Activated CD8-positive, alpha-beta memory T cell treated with anti-CD3 and anti-CD28 coated beads, Interleukin-2, amount 10 ng/mL, durations not matched to agents 7 days and 5 days (primary cell): ENCODE measurements at regions of chr7 and their contacts with region 1.

Region 1: GRCh38 chr7:128135515-128136214 is 104.4 kb upstream of the LRRC4 start:
- DNase-seq: peak; percentile 63
- ATAC-seq: peak; percentile 94
- H3K4me3 Mint-ChIP-seq: peak overlapping the region; percentile 61
- H3K27ac Mint-ChIP-seq: no peak overlapping the region
- H3K4me1 Mint-ChIP-seq: peaks cover 15% of the 10 kb centered on the region
- H3K27me3 Mint-ChIP-seq: peaks cover 48% of the 10 kb centered on the region

Region 2: GRCh38 chr7:127708788-127709187 is 426.9 kb before region 1 on chr7:
- CTCF ChIA-PET with region 1: interaction called, 21 read pairs
- DNase-seq: peak; percentile 79
- ATAC-seq: peak; percentile 81
- H3K4me3 Mint-ChIP-seq: no peak overlapping the region
- H3K27ac Mint-ChIP-seq: no peak overlapping the region
- H3K4me1 Mint-ChIP-seq: peaks cover 1% of the 10 kb centered on the region
- H3K27me3 Mint-ChIP-seq: no peaks in the 10 kb centered on the region

Region 3: GRCh38 chr7:128104035-128104742 is 31.5 kb before region 1 on chr7:
- CTCF ChIA-PET with region 1: interaction called, 36 read pairs
- DNase-seq: no peak
- ATAC-seq: peak; percentile 38
- H3K4me3 Mint-ChIP-seq: peak overlapping the region; percentile 79
- H3K27ac Mint-ChIP-seq: peak overlapping the region; percentile 79
- H3K4me1 Mint-ChIP-seq: peaks cover 44% of the 10 kb centered on the region
- H3K27me3 Mint-ChIP-seq: peaks cover 13% of the 10 kb centered on the region

Region 4: DNA sequence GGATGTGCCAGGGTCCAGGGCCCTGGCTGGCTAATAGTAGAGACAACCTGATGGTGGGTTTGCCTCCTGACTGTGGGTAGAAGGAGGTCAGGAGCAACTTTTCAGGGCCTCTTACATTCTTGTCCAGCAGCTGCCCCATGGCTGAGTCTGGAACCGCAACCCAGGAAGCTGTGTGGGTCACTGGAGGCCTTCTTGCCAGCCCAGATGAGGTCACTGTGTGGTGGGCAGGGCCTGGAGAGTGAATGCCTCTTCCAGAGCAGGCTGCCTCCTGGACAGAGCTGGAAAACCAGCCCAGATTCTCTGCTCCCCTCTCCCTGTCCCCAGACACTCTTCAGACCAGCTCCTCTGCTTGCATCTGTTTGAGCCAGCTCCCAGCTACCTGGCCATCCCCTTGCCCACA is 61.9 kb after region 1 on chr7:
- CTCF ChIA-PET with region 1: interaction called, 10 read pairs
- DNase-seq: peak; percentile 7
- ATAC-seq: no peak
- H3K4me3 Mint-ChIP-seq: no peak overlapping the region
- H3K27ac Mint-ChIP-seq: no peak overlapping the region
- H3K4me1 Mint-ChIP-seq: peaks cover 11% of the 10 kb centered on the region
- H3K27me3 Mint-ChIP-seq: peaks cover 47% of the 10 kb centered on the region

Region 5: GRCh38 chr7:128322040-128322643 is 186.5 kb after region 1 on chr7:
- CTCF ChIA-PET with region 1: interaction called, 23 read pairs
- DNase-seq: peak; percentile 71
- ATAC-seq: peak; percentile 63
- H3K4me3 Mint-ChIP-seq: peak overlapping the region; percentile 35
- H3K27ac Mint-ChIP-seq: peak overlapping the region; percentile 99
- H3K4me1 Mint-ChIP-seq: peaks cover 43% of the 10 kb centered on the region
- H3K27me3 Mint-ChIP-seq: no peaks in the 10 kb centered on the region